ENCODE measurements at regions of chr1 and their contacts with region 1.

Region 1: GRCh38 chr1:28329395-28330153 is 734 bp downstream of the MED18 start:
- DNase-seq: peak; percentile 28 to 60 (median 57)
- ATAC-seq: peak in 1 of 2 donors; percentile 41
- H3K4me3 ChIP-seq: peak overlapping the region; percentile 99
- H3K27ac ChIP-seq: peak overlapping the region; percentile 98
- H3K4me1 ChIP-seq: peaks cover 3% of the 10 kb centered on the region
- H3K27me3 ChIP-seq: no peaks in the 10 kb centered on the region

Region 2: DNA sequence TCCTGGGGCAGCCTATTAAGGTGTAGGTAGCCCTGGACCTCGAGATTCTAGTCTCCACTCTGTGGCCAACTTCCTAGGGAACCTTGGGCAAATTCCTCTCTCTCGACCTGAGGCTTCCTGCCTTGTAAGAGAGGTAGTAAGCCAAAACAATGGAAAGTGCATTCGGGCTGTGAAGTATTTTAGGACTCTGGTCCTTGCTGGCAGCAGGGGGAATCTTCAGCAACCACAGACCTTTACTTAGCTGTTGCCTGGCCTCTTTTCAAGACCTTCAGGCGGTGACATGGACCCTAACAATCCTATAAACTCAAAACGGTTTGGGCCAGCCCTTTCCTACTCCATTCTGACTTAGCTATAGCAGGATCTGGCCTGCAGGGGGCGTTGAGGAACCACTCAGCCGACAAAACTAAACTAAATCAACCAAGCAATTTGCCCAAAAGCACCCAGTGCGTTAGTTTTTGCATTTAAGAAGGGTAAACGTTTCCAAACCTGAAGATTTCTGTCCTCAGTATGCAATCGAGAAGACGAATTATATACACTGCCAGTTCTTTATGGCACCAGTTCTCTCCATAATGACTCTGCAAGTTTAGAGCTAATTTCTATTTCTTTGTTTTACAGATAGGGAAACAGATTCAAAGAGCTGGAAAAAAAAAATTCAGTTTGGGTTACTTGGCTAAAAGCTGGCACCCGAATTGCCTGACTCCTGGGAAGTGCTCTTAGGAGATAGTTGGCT is 81.1 kb before region 1 on chr1:
- intact Hi-C with region 1: loop called in 2 of 4 experiments (anchors 10 kb)
- DNase-seq: peak; percentile 73 to 91 (median 85)
- ATAC-seq: peak; percentile 50 to 56
- H3K4me3 ChIP-seq: no peak overlapping the region
- H3K27ac ChIP-seq: peak overlapping the region; percentile 93
- H3K4me1 ChIP-seq: peaks cover 3% of the 10 kb centered on the region
- H3K27me3 ChIP-seq: no peaks in the 10 kb centered on the region

Region 3: DNA sequence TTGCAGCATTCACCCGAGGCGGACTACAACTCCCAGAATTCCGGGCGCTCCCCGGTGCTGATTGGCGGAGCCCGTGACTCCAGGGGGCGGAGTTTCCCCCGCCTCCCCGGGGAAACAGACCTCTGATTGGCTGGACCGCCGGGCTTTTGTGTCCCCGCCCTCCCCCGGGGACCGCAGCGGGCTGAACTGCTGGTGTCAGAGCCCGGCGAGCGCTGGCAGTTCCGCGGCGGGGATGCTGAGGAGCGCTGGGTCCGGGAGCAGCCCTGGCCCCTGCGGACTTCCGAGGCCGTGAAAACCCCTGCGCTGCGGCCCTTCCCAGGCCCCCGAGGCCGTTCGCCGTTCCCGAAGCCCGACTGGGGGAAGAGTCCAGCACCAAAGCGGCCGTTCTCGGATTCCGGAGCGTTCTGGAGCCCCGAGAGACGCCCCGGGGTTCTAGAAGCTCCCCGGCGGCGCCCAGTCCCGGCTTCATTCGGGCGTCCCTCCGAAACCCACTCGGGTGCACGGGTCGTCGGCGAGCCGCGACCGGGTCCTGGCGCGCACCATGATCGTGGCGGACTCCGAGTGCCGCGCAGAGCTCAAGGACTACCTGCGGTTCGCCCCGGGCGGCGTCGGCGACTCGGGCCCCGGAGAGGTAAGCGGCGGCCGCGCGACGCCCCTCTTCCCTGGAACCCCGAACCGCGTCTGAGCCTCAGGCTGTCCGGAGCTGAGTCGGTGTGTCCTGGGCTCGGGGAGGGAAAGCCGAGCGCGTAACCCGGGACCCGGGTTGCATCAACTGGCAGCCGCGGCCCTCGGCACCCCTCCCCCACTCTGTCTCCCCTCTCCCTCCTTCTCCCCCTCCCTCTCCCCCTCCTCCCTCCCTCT is 70.0 kb before region 1 on chr1 and contains the start of gene SESN2:
- intact Hi-C with region 1: loop called in 1 of 4 experiments (anchors 10 kb)
- DNase-seq: peak; percentile 100
- ATAC-seq: peak; percentile 97
- H3K4me3 ChIP-seq: peak within 1 kb of the TSS; percentile 83
- H3K27ac ChIP-seq: peak within 1 kb of the TSS; percentile 93
- H3K4me1 ChIP-seq: peaks cover 7% of the 10 kb centered on the region
- H3K27me3 ChIP-seq: no peaks in the 10 kb centered on the region
- total RNA-seq, gene SESN2: 3.4 to 3.8 (median 3.6) TPM

Region 4: GRCh38 chr1:28282426-28283407 is 46.9 kb before region 1 on chr1:
- intact Hi-C with region 1: no loop called
- DNase-seq: no peak
- ATAC-seq: no peak
- H3K4me3 ChIP-seq: no peak overlapping the region
- H3K27ac ChIP-seq: no peak overlapping the region
- H3K4me1 ChIP-seq: no peaks in the 10 kb centered on the region
- H3K27me3 ChIP-seq: no peaks in the 10 kb centered on the region

Measured in right cardiac atrium (tissue), 5 donors.